ENCODE measurements at regions of chrX and their contacts with region 1.

Region 1: DNA sequence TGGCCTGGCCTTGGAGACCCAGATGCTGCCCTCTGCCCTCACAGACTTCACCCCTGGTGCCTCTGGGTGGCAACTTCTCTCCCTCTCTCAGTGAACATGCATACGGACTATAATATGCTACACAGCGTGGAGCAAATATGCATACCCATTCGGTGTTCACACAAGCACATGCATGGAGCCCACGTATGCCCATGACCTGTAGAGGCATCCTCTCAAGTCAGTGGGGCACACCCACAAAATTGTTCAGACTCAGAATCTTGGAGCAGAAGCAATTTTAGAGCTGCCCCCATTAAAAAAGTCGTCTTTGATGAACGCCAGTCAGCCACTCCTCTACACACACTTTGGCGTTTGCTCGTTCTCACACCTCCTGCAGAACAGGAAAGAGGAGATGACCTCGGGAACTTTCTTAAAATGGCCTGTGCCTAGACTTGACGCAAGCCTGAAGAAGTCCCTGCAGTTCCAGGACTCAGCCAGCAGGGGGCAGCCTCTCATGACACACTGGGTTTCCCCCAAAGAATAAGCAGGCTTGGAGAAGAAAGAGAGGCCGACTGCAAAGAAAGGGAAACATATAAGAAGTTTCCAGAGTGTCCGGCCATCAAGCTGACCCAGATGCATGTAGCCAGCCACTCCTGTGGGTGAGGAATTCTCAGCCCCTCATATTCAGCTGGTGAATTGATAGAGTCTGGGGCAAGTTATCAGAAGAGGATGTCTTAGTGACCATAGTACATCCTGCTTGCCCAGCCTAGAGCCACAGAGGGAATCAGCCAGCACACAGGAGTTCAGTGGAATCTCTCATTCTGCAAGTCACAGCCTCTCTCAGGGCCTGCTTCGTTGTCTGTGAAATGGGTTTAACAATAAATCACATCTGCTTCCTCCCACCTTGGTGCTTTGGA is 17.3 kb downstream of the APLN start:
- ATAC-seq: peak in 5 of 8 experiments; percentile 12 to 55 (median 18)
- H3K4me3 ChIP-seq: no peak overlapping the region
- H3K27ac ChIP-seq: no peak overlapping the region
- H3K4me1 ChIP-seq: peaks cover 12 to 16% of the 10 kb centered on the region in 2 donors

Region 2: DNA sequence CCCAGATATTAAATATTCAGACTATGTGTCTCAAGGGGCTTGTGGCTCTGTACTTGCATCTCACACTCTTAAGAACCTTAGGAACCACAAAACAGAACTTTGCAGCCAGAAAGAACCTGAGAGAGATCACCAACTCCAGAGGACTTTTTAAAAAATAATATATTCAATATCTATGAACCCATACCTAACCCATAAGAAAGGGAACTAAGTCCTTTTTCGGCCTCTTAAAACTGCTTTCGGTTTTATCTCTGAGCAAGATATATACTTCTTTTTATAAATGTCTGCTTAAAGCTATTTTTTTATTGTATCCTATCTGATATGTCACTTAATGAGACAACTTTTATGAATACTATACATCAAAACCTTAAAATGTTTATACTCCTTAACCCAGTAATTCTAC is 125.1 kb before region 1 on chrX:
- in situ Hi-C with region 1: no loop called
- ATAC-seq: no peak
- H3K4me3 ChIP-seq: no peak overlapping the region
- H3K27ac ChIP-seq: no peak overlapping the region
- H3K4me1 ChIP-seq: no peaks in the 10 kb centered on the region

Region 3: DNA sequence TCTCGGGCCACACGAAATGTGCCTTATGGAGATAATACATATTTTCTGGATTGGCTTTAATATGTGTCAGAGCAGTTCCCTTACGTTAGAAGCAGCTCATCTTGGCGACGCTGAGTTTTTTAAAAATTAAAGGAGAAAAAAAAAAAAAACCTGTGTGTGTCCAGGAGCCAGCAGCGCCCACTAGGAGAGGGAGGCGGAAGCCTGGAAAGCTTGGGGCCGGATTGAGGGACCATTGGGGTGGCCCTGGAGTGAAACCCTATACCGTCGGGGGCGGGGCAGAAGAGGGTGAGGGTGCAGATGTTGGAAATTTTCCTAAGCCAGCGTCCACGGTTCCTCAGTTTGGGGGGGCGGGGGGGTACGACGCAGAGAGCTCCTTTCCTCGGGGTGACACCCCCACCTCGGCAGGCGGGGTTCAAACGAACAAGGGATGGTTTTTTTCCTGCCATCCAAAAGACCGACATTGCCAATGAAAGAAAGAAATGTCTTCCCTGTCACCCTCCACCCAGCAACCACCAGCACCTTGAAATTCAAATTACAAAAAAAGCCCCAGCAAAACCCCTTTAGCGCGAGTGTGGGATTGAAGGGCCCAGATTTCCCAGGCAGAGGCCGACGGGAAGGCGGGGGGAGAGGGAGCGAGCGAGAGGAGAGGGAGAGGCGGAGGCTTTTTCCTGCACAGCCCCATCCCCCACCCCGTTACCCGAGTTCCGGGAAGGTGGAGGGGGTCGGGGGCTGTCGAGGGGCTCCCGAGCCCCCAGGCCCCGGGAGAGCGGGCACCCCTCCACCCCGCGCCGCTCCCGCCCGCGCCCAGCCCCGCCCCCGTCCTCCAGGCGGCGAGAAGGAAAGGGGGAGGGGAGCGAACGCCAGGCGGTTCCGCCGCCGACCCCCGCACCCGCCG is 115.0 kb before region 1 on chrX:
- in situ Hi-C with region 1: no loop called
- ATAC-seq: peak; percentile 58 to 82 (median 76)
- H3K4me3 ChIP-seq: peak overlapping the region; percentile 61 to 98 (median 82)
- H3K27ac ChIP-seq: peak overlapping the region; percentile 86 to 89
- H3K4me1 ChIP-seq: peaks cover 3 to 5% of the 10 kb centered on the region in 2 donors

Region 4: DNA sequence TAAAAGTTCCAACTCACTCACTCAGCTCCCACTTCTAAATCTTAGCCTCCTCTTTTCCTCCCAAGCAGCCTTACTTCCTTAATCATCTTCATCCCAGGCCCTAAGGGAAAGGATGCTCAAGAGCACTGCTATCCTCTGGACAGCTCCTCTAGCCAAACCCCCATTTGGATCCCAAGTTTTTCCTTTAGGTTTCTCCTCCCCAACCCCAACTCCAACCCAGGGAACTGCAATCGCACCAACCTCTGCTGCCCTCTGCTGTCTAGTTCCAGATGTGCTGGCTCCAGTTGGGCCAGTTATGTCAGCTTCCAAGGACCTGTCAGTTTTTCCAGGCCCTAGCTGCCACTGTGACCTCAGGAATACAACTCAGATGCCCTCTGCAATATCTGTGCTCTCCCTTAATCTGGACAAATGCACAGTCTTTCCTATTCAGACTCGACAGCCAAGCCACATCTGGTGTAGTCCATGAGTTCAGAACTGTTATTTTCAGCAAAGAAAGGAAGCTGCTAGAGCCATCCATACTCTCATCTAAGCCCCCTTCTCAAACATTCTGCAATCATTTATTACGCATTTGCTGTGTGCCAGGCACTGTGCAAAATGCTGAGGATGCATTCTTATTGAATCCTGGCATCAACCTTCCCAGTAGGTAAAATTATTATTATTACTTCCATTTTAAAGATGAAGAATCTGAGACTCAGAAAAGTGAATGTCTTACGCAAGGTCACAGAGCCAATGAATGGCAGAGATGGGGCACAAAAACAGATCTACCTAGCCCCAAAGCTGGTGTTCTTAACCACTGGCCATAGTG is 89.0 kb after region 1 on chrX:
- in situ Hi-C with region 1: loop called in 1 of 9 experiments (anchors 25 kb)
- ATAC-seq: peak in 7 of 8 experiments; percentile 38 to 84 (median 62)
- H3K4me3 ChIP-seq: no peak overlapping the region
- H3K27ac ChIP-seq: no peak overlapping the region
- H3K4me1 ChIP-seq: no peaks in the 10 kb centered on the region

Region 5: GRCh38 chrX:129843459-129844306 is 206.2 kb after region 1 on chrX and contains the start of gene ZDHHC9:
- in situ Hi-C with region 1: loop called in 1 of 9 experiments (anchors 25 kb)
- ATAC-seq: peak; percentile 92 to 98 (median 97)
- H3K4me3 ChIP-seq: peak within 1 kb of the TSS; percentile 39 to 80 (median 67)
- H3K27ac ChIP-seq: peak within 1 kb of the TSS; percentile 60 to 75
- H3K4me1 ChIP-seq: peaks cover 12 to 22% of the 10 kb centered on the region in 2 donors
- total RNA-seq, gene ZDHHC9: 9.3 to 30.0 (median 18.7) TPM

Region 6: DNA sequence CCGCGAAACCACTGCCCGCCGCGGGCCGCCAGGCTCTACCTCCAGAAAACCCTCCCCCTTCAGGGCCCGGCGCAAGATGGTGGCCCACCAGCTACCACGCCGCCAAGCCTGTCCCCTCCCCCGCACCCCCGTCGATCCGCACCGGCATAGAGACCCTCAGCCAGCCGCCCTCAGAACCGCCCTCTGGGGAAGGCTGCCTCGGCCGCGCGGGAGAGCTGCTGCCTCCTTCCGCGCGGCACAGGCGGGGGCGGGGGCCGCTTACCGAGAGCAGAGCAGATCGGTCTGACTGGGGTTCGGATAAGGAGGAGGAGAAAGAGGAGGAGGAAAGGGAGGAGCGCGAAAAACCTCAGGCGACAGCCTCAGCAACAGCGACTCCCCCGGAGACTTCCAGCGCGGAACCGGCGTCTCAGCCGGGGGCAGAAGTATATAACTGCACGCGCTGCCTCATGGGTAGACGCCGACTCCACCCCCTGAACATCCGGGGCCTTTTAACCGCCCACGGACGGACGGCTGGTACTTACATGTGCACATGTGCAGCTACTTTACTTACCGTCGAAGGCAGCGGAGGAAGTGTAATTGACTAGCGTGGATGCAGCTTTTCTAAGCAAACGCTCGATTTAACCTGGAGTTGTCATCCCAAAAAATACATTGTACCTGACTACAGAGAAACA is 631.2 kb after region 1 on chrX and contains the start of gene ZNF280C:
- in situ Hi-C with region 1: no loop called
- ATAC-seq: peak; percentile 95 to 98 (median 96)
- H3K4me3 ChIP-seq: peak within 1 kb of the TSS; percentile 48 to 96 (median 78)
- H3K27ac ChIP-seq: peak within 1 kb of the TSS; percentile 96
- H3K4me1 ChIP-seq: peaks cover 0 to 3% of the 10 kb centered on the region in 2 donors
- total RNA-seq, gene ZNF280C: 3.1 to 15.9 (median 10.5) TPM

Measured in motor neuron (in vitro differentiated cells).